ENCODE measurements at regions of chr16 and their contacts with region 1.

Region 1: DNA sequence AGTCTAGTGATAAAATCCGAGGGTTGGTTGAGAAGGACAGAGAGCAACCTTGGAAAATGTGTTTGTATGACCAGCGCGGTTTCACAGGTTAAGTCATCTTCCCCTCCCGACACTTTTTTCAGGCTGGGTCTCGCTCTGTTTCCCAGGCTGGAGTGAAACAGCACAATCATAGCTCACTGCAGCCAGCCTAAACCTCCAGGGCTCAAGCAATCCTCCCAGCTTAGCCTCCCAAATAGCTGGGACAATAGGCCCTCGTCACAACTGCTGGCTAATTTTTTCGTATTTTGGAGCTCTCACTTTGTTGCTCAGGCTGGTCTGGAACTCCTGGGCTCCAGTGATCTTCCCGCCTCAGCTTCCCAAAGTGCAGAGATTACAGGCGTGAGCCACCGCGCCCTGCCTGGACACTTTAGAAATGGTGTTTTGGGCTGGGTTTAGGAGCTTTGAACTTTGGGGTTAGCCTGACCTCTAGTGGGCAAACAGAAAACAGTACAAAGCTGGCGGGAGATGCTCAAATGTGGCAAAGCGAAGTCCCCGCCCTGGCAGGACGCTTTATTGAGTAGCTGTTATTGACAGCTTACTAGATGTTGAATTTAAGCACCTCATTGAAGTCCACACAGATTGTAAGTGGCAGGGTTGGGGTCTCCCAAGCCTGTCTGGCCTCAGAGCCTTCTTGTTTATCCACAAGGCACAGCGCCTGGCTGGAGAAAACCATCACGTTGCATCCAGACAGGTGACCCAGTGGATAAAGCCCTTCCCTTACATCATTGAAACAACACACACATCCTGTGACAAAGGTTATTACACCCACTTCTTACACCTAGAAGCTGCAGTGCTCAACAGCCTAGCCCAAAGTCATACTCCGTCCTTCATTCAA is 34.7 kb upstream of the RBBP6 start:
- DNase-seq: peak; percentile 65 to 74
- ATAC-seq: peak; percentile 92 to 98
- H3K4me3 ChIP-seq: no peak overlapping the region
- H3K27ac ChIP-seq: no peak overlapping the region
- H3K4me1 ChIP-seq: no peaks in the 10 kb centered on the region
- CTCF ChIP-seq: peak; percentile 82
- EP300 ChIP-seq: no peak
- POLR2A ChIP-seq: no peak
- RAD21 ChIP-seq: peak; percentile 91 to 94

Region 2: DNA sequence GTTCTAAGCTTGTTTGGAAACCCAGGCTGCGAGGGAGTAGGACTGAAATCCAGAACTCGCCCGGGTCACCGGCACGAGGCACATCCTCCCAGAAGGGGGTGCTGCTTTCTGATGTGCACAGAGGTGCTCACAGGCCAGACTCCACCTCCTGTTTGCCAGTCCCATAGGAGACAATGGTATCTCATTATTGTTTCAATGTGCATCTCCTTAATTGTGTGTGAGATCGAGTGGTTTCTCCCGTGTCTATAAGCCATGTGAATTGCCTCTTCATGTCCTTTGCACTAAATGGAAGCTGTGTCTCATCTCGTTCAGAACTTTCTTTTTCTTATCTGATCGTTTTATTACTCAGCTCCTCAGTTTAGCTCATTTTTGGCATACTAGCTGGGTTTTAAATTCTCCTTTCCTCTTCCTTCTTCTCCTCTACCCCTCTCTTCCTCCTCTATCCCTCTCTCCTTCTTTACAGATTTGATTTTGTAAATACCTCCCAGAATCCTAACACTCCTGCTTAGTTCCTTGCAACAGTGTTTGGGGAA is 701.1 kb before region 1 on chr16:
- CTCF ChIA-PET with region 1: interaction called, 10 read pairs
- POLR2A ChIA-PET with region 1: no interaction called
- DNase-seq: peak; percentile 55 to 60
- ATAC-seq: peak; percentile 91 to 95
- H3K4me3 ChIP-seq: no peak overlapping the region
- H3K27ac ChIP-seq: no peak overlapping the region
- H3K4me1 ChIP-seq: 0 out of 3 replicates have a peak, but pooled peaks cover 5% of the 10 kb centered on the region
- CTCF ChIP-seq: peak; percentile 52
- EP300 ChIP-seq: no peak
- POLR2A ChIP-seq: no peak
- RAD21 ChIP-seq: peak; percentile 55 to 62

Region 3: GRCh38 chr16:24041826-24042631 is 462.7 kb before region 1 on chr16:
- CTCF ChIA-PET with region 1: interaction called, 279 read pairs
- POLR2A ChIA-PET with region 1: no interaction called
- DNase-seq: peak; percentile 65 to 69
- ATAC-seq: peak; percentile 76 to 89; a peak in 5 of 6 replicates
- H3K4me3 ChIP-seq: no peak overlapping the region
- H3K27ac ChIP-seq: no peak overlapping the region
- H3K4me1 ChIP-seq: no peaks in the 10 kb centered on the region
- CTCF ChIP-seq: peak; percentile 79
- EP300 ChIP-seq: no peak
- POLR2A ChIP-seq: no peak
- RAD21 ChIP-seq: peak; percentile 78 to 89

Region 4: DNA sequence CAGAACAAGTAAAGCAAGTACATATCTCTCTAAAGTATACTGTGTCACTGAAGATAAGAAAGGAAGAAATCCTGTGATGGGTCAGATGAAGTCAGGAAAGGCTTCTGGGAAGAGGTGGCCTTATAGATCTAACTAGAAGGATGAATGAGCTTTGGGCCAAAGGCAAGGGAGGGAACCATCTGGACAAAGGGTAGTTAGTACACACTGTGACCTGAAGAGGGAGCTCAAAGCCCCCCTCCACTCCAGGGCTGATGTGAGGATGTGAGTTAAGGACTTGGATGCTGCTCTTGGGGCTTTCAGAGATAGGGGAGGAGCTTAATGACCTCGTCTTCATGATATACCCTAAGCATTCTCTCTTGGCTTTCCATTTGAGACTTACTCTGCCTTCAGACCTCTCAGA is 433.9 kb before region 1 on chr16:
- CTCF ChIA-PET with region 1: interaction called, 23 read pairs
- POLR2A ChIA-PET with region 1: no interaction called
- DNase-seq: peak; percentile 51 to 65
- ATAC-seq: peak; percentile 80 to 92; a peak in 5 of 6 replicates
- H3K4me3 ChIP-seq: no peak overlapping the region
- H3K27ac ChIP-seq: no peak overlapping the region
- H3K4me1 ChIP-seq: no peaks in the 10 kb centered on the region
- CTCF ChIP-seq: peak; percentile 40
- EP300 ChIP-seq: no peak
- POLR2A ChIP-seq: no peak
- RAD21 ChIP-seq: peak; percentile 37 to 56; a peak in 4 of 5 replicates

Region 5: GRCh38 chr16:24482681-24483202 is 22.0 kb before region 1 on chr16:
- CTCF ChIA-PET with region 1: interaction called, 12 read pairs
- POLR2A ChIA-PET with region 1: no interaction called
- DNase-seq: no peak
- ATAC-seq: no peak
- H3K4me3 ChIP-seq: no peak overlapping the region
- H3K27ac ChIP-seq: no peak overlapping the region
- H3K4me1 ChIP-seq: no peaks in the 10 kb centered on the region
- CTCF ChIP-seq: no peak
- EP300 ChIP-seq: no peak
- POLR2A ChIP-seq: no peak
- RAD21 ChIP-seq: no peak

Region 6: GRCh38 chr16:24516900-24517669 is 12.4 kb after region 1 on chr16:
- CTCF ChIA-PET with region 1: interaction called, 67 read pairs
- POLR2A ChIA-PET with region 1: no interaction called
- DNase-seq: peak; percentile 74 to 91
- ATAC-seq: peak; percentile 91 to 94
- H3K4me3 ChIP-seq: peak overlapping the region; percentile 31
- H3K27ac ChIP-seq: peak overlapping the region in 1 of 2 experiments; percentile 74; a peak in 3 of 6 replicates
- H3K4me1 ChIP-seq: no peaks in the 10 kb centered on the region
- CTCF ChIP-seq: peak; percentile 94
- EP300 ChIP-seq: no peak
- POLR2A ChIP-seq: no peak
- RAD21 ChIP-seq: peak; percentile 86 to 90